OCI-LY7 (cell line): ENCODE measurements at regions of chr3 and their contacts with region 1.

Region 1: GRCh38 chr3:116770815-116771450 is 61.4 kb downstream of the TUSC7 start:
- DNase-seq: peak; percentile 58
- H3K4me3 ChIP-seq: no peak overlapping the region
- H3K27ac ChIP-seq: no peak overlapping the region
- H3K4me1 ChIP-seq: no peaks in the 10 kb centered on the region
- CTCF ChIP-seq: peak; percentile 85

Region 2: GRCh38 chr3:116155841-116156240 is 615.1 kb before region 1 on chr3:
- CTCF ChIA-PET with region 1: no interaction called
- POLR2A ChIA-PET with region 1: no interaction called
- intact Hi-C with region 1: no loop called
- DNase-seq: no peak
- H3K4me3 ChIP-seq: no peak overlapping the region
- H3K27ac ChIP-seq: no peak overlapping the region
- H3K4me1 ChIP-seq: no peaks in the 10 kb centered on the region
- CTCF ChIP-seq: no peak

Region 3: DNA sequence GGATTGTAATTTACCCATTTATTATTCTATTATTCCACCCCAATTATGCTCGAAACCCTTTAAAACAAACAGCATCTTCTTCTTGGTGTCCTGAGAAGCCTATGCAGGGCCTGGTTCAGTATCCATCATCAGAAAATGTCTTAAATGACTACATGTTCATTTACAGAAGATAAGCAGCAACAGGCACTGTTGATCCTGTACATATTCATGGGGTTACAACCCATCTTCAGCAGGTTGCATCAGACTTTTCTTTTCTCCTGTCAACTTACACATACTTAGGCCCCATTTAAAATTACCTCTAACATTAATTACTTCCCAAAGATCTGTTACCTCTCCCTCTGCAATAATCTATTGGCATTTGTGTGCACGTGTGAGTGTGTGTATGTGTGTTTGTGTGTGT is 42.5 kb before region 1 on chr3:
- CTCF ChIA-PET with region 1: no interaction called
- POLR2A ChIA-PET with region 1: no interaction called
- intact Hi-C with region 1: no loop called
- DNase-seq: no peak
- H3K4me3 ChIP-seq: no peak overlapping the region
- H3K27ac ChIP-seq: no peak overlapping the region
- H3K4me1 ChIP-seq: no peaks in the 10 kb centered on the region
- CTCF ChIP-seq: no peak

Region 4: GRCh38 chr3:116886202-116886893 is 115.4 kb after region 1 on chr3:
- CTCF ChIA-PET with region 1: no interaction called
- POLR2A ChIA-PET with region 1: no interaction called
- intact Hi-C with region 1: no loop called
- DNase-seq: peak; percentile 56
- H3K4me3 ChIP-seq: peak overlapping the region; percentile 52
- H3K27ac ChIP-seq: peak overlapping the region; percentile 84
- H3K4me1 ChIP-seq: peaks cover 25% of the 10 kb centered on the region
- CTCF ChIP-seq: no peak

Region 5: GRCh38 chr3:116939106-116939505 is 168.2 kb after region 1 on chr3:
- CTCF ChIA-PET with region 1: no interaction called
- POLR2A ChIA-PET with region 1: no interaction called
- intact Hi-C with region 1: no loop called
- DNase-seq: no peak
- H3K4me3 ChIP-seq: no peak overlapping the region
- H3K27ac ChIP-seq: no peak overlapping the region
- H3K4me1 ChIP-seq: no peaks in the 10 kb centered on the region
- CTCF ChIP-seq: no peak

Region 6: DNA sequence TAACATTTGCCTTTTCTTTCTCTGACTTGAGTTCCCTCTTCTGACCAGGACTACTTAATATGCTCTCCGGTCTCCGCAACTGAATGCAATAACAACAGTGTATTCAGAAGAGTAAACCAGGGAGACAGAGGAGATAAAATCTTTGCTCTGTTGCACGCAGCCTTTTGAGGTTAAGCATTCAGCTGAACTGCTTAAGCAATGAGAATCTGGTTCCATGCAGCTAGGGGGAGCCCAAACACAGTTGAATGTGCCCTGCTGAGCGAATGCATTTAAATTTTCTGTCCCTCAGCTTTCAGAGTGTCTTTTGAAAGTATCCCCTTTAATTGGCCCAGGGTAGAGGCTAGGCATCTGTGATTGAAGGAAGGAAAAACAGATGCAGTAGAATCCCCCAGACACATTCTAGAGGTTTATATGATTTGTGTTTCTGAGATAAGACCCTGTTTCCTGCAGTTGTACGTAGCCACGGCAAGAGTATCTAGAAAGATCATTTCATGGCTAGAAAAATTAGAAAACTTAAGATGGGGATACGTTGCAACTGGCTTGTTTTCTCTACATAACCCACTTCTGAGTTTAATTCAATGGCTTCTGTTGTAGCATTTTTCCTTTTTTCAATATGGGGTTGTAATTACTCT is 248.3 kb after region 1 on chr3:
- CTCF ChIA-PET with region 1: no interaction called
- POLR2A ChIA-PET with region 1: no interaction called
- intact Hi-C with region 1: loop called (anchors 10 kb)
- DNase-seq: peak; percentile 42
- H3K4me3 ChIP-seq: no peak overlapping the region
- H3K27ac ChIP-seq: no peak overlapping the region
- H3K4me1 ChIP-seq: no peaks in the 10 kb centered on the region
- CTCF ChIP-seq: peak; percentile 79

Region 7: DNA sequence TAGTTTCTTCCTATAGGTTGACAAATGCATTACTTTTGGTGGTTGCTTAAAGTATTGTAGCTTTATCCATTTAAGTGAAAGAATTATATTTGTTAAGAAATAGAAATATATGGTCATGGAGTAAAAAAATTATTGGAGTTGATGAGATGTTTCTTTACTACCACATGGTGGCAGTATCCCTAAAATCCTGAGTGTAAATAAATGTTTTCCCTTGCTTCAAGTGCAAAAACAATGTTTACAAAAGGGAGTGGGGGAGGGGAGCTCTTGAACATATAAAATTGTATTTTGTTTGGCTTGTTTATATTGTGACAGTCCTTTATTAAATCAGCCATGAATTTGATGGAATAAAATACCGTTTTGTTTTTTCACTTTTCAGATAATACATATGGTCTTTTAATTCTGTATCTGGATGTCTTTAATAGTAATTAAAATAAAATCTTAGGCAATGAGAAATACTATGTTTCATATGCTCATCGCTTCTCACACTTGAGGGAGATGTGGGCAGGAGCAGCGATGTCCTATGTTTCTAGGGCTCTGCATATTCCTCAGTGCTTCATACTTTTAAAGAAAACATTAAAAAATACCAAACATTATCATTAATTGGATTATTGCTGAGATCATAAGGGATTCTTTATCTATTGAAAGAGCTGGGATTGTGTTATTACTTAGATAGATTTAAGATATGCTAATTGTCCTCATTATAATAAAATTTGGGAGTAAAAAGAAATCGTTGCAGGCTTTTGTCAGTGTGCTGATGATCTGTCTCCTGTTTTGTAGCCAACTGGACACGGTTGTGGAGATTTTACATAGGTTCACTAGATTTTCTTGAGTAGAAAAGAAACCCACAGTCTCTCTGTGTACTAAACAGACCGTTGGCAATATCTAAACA is 288.4 kb after region 1 on chr3:
- CTCF ChIA-PET with region 1: no interaction called
- POLR2A ChIA-PET with region 1: interaction called, 3 read pairs
- intact Hi-C with region 1: loop called (anchors 1 kb)
- DNase-seq: peak; percentile 21
- H3K4me3 ChIP-seq: no peak overlapping the region
- H3K27ac ChIP-seq: no peak overlapping the region
- H3K4me1 ChIP-seq: no peaks in the 10 kb centered on the region
- CTCF ChIP-seq: peak; percentile 77

Region 8: GRCh38 chr3:117526470-117527079 is 755.6 kb after region 1 on chr3:
- CTCF ChIA-PET with region 1: no interaction called
- POLR2A ChIA-PET with region 1: no interaction called
- intact Hi-C with region 1: loop called (anchors 2 kb)
- DNase-seq: peak; percentile 22
- H3K4me3 ChIP-seq: no peak overlapping the region
- H3K27ac ChIP-seq: no peak overlapping the region
- H3K4me1 ChIP-seq: no peaks in the 10 kb centered on the region
- CTCF ChIP-seq: peak; percentile 85

Region 9: DNA sequence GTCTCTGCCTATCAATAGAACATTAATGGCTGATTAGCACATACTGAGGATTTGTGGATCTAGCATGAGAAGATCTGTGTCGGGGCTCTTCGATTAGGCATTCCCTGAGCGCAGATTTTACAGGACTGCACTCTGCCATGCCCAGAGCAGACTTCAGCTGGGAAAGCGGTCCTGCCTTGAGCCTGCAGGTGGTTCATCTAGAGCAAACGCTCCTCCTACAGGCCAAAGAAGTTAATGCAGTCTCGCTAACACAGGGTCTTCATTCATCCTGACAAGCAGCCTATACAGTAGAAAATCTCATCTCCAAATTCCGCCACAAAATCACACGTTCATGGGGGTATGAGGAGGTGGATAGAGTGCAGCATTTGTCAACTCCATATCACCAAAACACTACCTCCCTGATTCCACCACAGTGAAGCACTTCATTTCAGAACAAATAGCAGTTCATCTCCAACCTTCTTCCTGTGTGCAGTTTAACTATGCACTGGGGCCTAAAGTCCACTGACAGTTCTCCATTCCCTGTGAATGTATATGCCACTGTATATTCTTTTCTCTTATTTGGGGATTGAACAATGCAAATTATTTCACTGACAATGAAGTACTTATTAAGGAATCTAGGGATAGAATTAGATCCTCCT is 1857.9 kb after region 1 on chr3:
- CTCF ChIA-PET with region 1: interaction called, 4 read pairs
- POLR2A ChIA-PET with region 1: no interaction called
- intact Hi-C with region 1: loop called (anchors 2 kb)
- DNase-seq: peak; percentile 46
- H3K4me3 ChIP-seq: no peak overlapping the region
- H3K27ac ChIP-seq: no peak overlapping the region
- H3K4me1 ChIP-seq: no peaks in the 10 kb centered on the region
- CTCF ChIP-seq: peak; percentile 80